WTC11 (cell line): ENCODE measurements at regions of chr12 and their contacts with region 1.

Region 1: DNA sequence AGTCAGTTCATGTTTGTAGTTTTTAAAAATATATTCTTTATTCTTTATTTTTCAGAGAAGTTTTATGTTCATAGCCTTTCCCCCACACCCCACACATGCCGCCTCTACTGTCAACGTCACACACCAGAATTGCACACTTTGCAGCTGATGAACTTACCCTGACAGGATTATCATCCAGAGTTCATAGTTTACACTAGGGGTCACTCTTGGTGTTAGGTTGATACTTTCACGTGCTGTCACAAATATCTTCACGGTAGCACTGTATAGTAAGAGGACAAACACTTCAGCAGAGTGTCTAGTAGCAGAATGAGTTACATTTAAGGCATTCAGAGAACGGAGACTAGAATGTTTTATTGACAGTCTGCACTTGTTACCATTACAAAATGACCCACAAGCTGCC is 5.1 kb downstream of the DPPA3 start:
- DNase-seq: no peak
- ATAC-seq: peak; percentile 85
- H3K4me3 Mint-ChIP-seq: no peak overlapping the region
- H3K27ac Mint-ChIP-seq: no peak overlapping the region
- H3K4me1 Mint-ChIP-seq: peaks cover 36% of the 10 kb centered on the region
- H3K27me3 Mint-ChIP-seq: no peaks in the 10 kb centered on the region
- CTCF ChIP-seq: no peak

Region 2: DNA sequence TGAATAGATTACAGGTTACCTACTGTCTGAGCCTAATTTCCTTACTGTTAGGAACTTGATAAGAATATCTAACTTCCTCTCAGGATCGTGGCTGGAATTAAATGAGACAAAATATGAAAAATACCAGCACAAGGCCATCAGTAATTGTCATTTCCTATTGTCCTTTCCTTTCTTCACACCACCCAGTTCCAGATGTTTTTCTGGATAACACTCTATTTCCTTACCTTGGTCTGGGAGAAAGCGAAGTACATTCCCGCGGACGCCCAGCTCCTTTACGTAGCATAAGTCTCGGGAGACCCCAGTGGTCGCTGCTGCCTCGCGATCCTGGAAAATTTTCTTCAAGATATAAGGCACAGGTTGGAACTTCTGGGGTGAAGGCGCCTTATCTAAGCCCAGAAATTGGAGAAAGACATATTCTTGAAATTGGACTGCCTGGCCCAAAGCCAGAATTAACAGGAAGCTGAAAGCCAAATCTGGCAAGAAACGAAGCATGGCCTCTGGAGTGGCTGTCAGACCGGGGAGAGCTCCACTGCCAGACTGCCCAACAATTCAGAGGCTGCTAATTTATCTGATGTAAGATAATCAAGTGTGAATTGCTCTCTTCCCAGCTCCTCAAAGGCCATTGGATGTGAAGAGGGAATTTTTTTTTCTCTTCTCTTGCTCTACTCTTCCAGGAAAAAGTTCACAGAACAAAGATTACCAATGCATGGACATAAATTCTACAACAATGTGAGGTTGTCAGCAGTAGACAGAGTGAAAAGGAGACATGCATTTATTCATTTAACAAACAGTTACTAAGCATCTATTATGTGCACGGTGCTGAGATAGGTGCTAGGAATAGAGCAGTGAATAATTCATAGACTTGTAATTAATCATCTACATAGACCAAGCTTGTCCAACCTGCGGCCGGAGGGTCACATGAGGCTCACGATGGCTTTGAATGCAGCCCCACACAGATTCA is 20.9 kb before region 1 on chr12 and contains the start of gene GDF3:
- CTCF ChIA-PET with region 1: interaction called, 10 read pairs
- POLR2A ChIA-PET with region 1: no interaction called
- DNase-seq: no peak
- ATAC-seq: peak; percentile 26
- H3K4me3 Mint-ChIP-seq: peak within 1 kb of the TSS; percentile 40
- H3K27ac Mint-ChIP-seq: peak within 1 kb of the TSS; percentile 94
- H3K4me1 Mint-ChIP-seq: peaks cover 47% of the 10 kb centered on the region
- H3K27me3 Mint-ChIP-seq: no peaks in the 10 kb centered on the region
- CTCF ChIP-seq: no peak
- total RNA-seq, gene GDF3: 34.4 to 42.0 TPM (median 38.2 TPM) in 3 replicates

Region 3: DNA sequence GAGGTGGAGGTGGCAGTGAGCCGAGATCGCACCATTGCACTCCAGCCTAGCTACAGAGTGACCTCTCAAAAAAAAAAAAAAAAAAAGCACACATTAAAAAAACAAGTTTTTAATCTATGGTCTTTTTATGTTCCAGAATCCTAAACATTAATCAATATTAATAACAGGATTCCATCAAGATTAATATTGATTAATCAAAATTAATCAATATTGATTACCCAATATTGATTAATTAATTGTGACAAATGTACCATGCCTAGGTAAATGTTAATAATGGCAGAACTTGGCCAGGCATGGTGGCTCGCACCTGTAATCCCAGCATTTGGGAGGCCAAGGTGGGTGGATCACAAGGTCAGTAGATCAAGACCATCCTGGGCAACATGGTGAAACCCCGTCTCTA is 64.9 kb after region 1 on chr12:
- CTCF ChIA-PET with region 1: no interaction called
- POLR2A ChIA-PET with region 1: no interaction called
- DNase-seq: no peak
- ATAC-seq: no peak
- H3K4me3 Mint-ChIP-seq: no peak overlapping the region
- H3K27ac Mint-ChIP-seq: no peak overlapping the region
- H3K4me1 Mint-ChIP-seq: peaks cover 22% of the 10 kb centered on the region
- H3K27me3 Mint-ChIP-seq: no peaks in the 10 kb centered on the region
- CTCF ChIP-seq: no peak